Activated CD4-positive, alpha-beta T cell treated with anti-CD3 and anti-CD28 coated beads, Interleukin-2, amount 10 ng/mL, durations not matched to agents 24 days and 14 days (primary cell): ENCODE measurements at regions of chr11 and their contacts with region 1.

Region 1: GRCh38 chr11:35391922-35392813 is 27.2 kb downstream of the SLC1A2 start:
- DNase-seq: peak; percentile 94
- H3K4me3 Mint-ChIP-seq: peak overlapping the region; percentile 66
- H3K27ac Mint-ChIP-seq: peak overlapping the region; percentile 24
- H3K4me1 Mint-ChIP-seq: peaks cover 24% of the 10 kb centered on the region
- H3K27me3 Mint-ChIP-seq: peaks cover 14% of the 10 kb centered on the region

Region 2: GRCh38 chr11:34512840-34513681 is 879.1 kb before region 1 on chr11:
- intact Hi-C with region 1: loop called (anchors 5 kb)
- DNase-seq: peak; percentile 82
- H3K4me3 Mint-ChIP-seq: no peak overlapping the region
- H3K27ac Mint-ChIP-seq: no peak overlapping the region
- H3K4me1 Mint-ChIP-seq: no peaks in the 10 kb centered on the region
- H3K27me3 Mint-ChIP-seq: peaks cover 5% of the 10 kb centered on the region

Region 3: GRCh38 chr11:34840736-34841386 is 551.3 kb before region 1 on chr11:
- intact Hi-C with region 1: loop called (anchors 5 kb)
- DNase-seq: peak; percentile 69
- H3K4me3 Mint-ChIP-seq: no peak overlapping the region
- H3K27ac Mint-ChIP-seq: no peak overlapping the region
- H3K4me1 Mint-ChIP-seq: no peaks in the 10 kb centered on the region
- H3K27me3 Mint-ChIP-seq: peaks cover 16% of the 10 kb centered on the region

Region 4: DNA sequence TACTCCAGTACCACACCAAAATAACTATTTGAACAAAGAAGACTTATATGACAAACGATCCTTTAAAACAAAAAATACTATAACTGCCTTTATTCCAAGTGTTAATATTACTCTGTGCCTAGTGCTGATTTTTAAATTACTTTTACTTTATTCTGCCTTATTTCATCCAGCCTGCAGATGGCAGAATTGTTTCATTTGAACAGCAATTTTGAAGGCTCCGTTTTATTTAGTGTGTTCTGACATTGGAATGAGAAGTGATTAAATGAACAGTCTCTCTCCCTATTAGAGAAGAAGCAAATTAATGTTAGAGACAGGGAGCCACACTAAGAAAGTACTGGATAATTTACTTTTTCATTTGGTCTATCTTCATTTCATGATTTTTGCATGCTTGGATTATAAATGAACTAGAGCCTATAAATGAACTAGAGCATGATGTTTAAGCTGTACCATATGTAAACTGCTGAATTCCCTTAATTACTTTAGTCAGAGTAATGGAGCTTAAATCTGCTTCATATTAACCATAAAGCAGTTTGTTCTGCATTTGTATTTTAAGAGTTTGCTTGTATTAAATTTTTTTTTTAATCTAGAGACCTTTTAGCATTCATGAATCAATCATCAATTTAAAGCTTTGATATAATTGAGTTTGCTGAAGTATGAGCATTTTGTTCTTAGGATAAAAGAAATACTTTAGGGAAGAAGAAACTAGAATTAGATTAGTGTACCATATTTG is 465.9 kb before region 1 on chr11:
- intact Hi-C with region 1: loop called (anchors 1 kb)
- DNase-seq: peak; percentile 77
- H3K4me3 Mint-ChIP-seq: no peak overlapping the region
- H3K27ac Mint-ChIP-seq: no peak overlapping the region
- H3K4me1 Mint-ChIP-seq: peaks cover 11% of the 10 kb centered on the region
- H3K27me3 Mint-ChIP-seq: no peaks in the 10 kb centered on the region

Region 5: DNA sequence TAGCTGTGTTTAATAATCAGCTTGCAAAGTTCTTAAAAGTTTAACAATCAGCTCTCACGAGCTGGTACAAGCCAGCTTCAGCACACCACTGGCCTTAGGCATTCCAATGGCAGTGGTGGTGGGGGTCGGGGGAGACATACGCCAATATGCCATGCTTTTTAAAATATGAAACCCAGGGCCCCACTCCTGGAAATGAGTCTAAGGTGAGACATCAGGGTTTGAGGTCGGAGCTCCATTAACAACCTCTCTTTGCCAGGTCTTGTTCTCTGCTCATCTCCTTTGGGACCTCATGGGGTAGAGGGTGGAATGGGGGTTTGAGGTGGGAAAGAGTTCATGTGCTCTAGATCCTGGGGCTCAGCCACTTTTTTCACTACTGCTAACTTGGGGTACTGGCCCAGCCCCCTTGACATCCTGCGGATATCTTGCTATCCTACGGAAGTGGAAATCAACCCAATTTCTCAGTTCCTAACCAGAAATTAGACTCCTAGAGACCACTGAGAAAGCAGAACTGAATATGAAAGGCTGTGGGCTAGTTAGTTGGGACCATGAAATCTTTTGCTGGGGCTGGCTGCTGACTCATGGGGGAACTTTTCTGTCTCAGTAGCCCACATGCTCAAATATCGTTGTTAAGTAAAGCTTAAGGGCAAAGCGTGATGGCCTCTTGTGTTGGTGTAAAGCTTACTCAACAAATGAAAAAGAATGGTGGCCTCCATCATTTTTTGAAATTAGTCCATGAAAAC is 385.6 kb before region 1 on chr11:
- intact Hi-C with region 1: loop called (anchors 2 kb)
- DNase-seq: peak; percentile 69
- H3K4me3 Mint-ChIP-seq: peak overlapping the region; percentile 25
- H3K27ac Mint-ChIP-seq: peak overlapping the region; percentile 51
- H3K4me1 Mint-ChIP-seq: peaks cover 42% of the 10 kb centered on the region
- H3K27me3 Mint-ChIP-seq: peaks cover 14% of the 10 kb centered on the region

Region 6: DNA sequence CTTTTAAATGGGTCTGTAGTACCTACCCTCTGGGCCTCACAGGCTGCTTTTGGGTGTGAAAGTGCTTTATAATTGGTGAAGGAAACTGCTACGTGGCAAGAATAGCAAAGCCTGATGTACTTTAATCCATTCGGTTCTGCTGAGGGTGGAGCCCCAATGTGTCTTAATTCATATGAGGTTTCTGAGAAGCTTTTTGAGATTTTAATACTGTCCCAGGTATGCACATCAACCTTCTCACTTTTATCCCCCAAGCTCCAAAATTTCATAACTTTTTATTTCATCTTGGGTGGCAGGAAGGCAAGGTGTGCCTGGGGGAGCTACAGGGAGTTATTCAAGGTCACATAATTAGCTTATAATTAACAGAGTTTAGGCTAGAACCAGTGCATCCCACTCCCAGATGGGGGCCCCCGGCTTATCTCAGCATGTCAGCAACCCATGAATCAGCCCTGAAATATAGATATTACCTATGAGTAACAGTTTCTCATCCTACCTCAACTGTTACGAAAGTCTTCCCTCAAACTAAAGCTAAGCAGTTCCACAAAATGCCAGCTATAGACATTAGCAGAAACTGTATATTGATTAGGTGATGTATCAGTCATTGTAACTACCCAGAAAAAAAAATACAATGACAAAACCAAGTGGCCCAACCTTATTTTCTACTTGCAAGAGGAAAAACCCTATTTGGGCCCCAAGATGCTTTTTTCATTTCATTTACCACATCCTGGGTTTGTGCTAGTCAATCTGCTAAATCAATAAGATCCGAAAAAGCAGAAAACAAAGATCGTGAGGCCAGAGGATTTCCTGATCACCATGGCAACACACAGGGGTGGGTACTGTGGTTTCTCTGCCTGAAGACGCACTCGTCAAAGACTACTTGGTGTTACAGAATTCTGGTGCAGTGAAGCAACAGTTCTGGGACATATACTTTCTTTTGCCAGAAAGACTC is 226.5 kb before region 1 on chr11:
- intact Hi-C with region 1: loop called (anchors 2 kb)
- DNase-seq: peak; percentile 98
- H3K4me3 Mint-ChIP-seq: peak overlapping the region; percentile 78
- H3K27ac Mint-ChIP-seq: peak overlapping the region; percentile 99
- H3K4me1 Mint-ChIP-seq: peaks cover 93% of the 10 kb centered on the region
- H3K27me3 Mint-ChIP-seq: no peaks in the 10 kb centered on the region

Region 7: DNA sequence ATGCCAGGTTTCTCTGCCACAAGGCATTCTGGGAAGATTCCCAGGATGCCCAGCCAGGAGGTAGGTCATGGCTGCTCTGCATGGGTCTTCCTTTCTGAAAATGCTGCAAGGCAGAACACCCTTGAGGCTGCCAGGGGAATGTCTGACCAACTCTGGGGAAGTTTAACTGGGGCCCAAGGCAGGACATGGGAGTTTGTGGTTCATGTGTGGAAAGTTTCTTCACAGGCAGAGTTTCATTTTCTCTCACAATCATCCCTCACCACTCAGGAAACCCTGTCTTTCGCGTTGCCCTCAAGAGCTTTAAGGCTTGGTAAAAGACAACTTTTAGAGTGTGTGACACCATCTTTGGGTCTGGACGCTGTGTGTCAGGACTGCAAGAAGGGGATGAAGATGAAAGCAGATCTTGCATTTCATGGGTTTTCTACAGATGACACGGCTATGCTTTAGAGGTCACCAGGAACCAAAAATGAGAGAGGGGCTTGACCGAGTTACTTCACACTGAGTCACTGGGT is 119.7 kb before region 1 on chr11:
- intact Hi-C with region 1: loop called (anchors 1 kb)
- DNase-seq: peak; percentile 86
- H3K4me3 Mint-ChIP-seq: peak overlapping the region; percentile 16
- H3K27ac Mint-ChIP-seq: peak overlapping the region; percentile 87
- H3K4me1 Mint-ChIP-seq: peaks cover 60% of the 10 kb centered on the region
- H3K27me3 Mint-ChIP-seq: peaks cover 2% of the 10 kb centered on the region

Region 8: GRCh38 chr11:35549787-35550186 is 157.6 kb after region 1 on chr11:
- intact Hi-C with region 1: no loop called
- DNase-seq: no peak
- H3K4me3 Mint-ChIP-seq: no peak overlapping the region
- H3K27ac Mint-ChIP-seq: no peak overlapping the region
- H3K4me1 Mint-ChIP-seq: no peaks in the 10 kb centered on the region
- H3K27me3 Mint-ChIP-seq: peaks cover 12% of the 10 kb centered on the region